ENCODE measurements at regions of chr6 and their contacts with region 1.

Region 1: DNA sequence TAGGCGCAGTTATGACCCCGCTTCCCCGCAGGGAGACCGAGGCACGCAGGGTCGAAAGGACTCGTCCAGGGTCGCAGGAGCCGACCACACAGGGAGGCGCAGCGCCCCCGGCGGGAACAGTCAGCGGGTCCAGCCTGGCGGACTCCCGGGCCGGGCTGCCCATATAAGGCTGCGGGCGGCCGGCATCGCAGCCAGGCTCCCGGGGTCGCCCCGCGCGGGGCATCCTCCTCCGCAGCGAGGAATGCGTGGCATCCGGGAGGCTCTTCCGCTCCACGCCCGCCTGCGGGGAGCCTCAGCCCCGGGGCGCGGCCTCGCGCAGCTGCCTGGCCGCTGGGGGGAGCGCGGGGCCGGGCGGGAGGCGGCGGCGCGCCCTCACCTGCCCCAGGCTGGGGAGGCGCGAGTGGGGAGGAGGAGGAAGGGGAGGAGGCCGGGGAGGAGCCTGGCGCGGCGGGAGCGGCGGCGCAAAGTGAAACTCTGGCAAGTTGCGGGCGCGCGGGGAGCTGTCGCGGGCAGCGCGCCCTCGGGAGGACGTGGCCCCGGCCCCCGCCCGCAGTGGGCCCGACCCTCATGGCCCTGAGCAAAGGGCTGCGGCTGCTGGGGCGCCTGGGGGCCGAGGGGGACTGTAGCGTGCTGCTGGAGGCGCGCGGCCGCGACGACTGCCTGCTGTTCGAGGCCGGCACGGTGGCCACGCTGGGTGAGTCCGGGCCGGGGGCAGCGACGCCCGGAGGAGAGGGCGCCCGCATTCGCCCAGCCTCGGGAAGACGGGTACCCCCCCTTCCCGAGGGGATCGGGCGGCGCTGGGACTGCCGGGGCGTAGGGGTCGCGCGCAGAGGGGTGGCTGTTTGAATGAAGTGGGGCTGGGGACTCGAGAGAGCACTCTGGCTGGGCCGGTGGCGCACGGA is at the start of gene SYNJ2:
- DNase-seq: peak; percentile 96
- H3K4me3 Mint-ChIP-seq: peak within 1 kb of the TSS; percentile 73
- H3K27ac Mint-ChIP-seq: peak within 1 kb of the TSS; percentile 87
- H3K4me1 Mint-ChIP-seq: peaks cover 48% of the 10 kb centered on the region
- H3K27me3 Mint-ChIP-seq: peaks cover 8% of the 10 kb centered on the region
- total RNA-seq, gene SYNJ2: 22.2 and 24.3 TPM in 2 replicates

Region 2: GRCh38 chr6:157823001-157823527 is 158.6 kb before region 1 on chr6 and contains the start of gene SNX9:
- intact Hi-C with region 1: loop called (anchors 5 kb)
- DNase-seq: peak; percentile 89
- H3K4me3 Mint-ChIP-seq: peak within 1 kb of the TSS; percentile 95
- H3K27ac Mint-ChIP-seq: peak within 1 kb of the TSS; percentile 99
- H3K4me1 Mint-ChIP-seq: peaks cover 34% of the 10 kb centered on the region
- H3K27me3 Mint-ChIP-seq: peaks cover 34% of the 10 kb centered on the region
- total RNA-seq, gene SNX9: 33.7 and 34.0 TPM in 2 replicates

Region 3: GRCh38 chr6:157941101-157941863 is 40.4 kb before region 1 on chr6:
- intact Hi-C with region 1: loop called (anchors 2 kb)
- DNase-seq: peak; percentile 52
- H3K4me3 Mint-ChIP-seq: no peak overlapping the region
- H3K27ac Mint-ChIP-seq: no peak overlapping the region
- H3K4me1 Mint-ChIP-seq: peaks cover 25% of the 10 kb centered on the region
- H3K27me3 Mint-ChIP-seq: no peaks in the 10 kb centered on the region

Region 4: DNA sequence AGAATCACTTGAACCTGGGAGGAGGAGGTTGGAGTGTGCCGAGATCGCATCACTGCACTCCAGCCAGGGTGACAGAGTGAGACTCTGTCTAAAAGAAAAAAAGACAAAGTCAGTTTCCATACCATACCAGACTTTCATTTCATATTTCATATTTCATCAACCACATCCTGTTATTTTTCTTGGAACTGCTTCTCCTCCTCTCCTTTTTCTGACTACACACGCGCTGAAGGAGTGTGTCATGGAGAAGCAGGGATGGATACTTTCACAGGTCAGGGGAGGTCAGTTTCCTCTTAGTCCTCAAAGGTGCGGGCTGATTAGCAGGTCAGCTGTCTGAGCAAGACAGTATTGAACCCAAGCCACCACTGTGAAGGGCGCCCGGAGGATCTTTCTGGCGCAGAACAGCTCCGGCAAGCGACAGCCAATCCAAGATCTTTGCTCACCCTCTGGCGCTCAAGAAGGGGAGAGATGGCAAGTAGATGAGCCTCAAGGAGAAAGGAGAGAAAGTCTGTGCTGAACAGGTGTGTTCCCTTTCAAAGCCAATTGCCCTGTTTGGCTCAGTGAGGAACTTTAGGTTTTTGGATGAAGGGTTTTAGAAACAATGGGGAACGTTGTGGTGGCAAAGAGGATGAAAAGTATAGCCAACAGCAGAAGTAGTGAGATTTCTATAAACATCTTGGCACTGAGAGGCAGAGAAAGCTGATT is 18.9 kb before region 1 on chr6:
- intact Hi-C with region 1: loop called (anchors 1 kb)
- DNase-seq: peak; percentile 80
- H3K4me3 Mint-ChIP-seq: peak overlapping the region; percentile 80
- H3K27ac Mint-ChIP-seq: peak overlapping the region; percentile 95
- H3K4me1 Mint-ChIP-seq: peaks cover 29% of the 10 kb centered on the region
- H3K27me3 Mint-ChIP-seq: no peaks in the 10 kb centered on the region

Region 5: GRCh38 chr6:158002951-158003853 is 21.6 kb after region 1 on chr6:
- intact Hi-C with region 1: loop called (anchors 2 kb)
- DNase-seq: peak; percentile 68
- H3K4me3 Mint-ChIP-seq: peak overlapping the region; percentile 17
- H3K27ac Mint-ChIP-seq: peak overlapping the region; percentile 74
- H3K4me1 Mint-ChIP-seq: peaks cover 40% of the 10 kb centered on the region
- H3K27me3 Mint-ChIP-seq: no peaks in the 10 kb centered on the region

Region 6: GRCh38 chr6:158047127-158047518 is 65.5 kb after region 1 on chr6:
- intact Hi-C with region 1: loop called (anchors 5 kb)
- DNase-seq: peak; percentile 85
- H3K4me3 Mint-ChIP-seq: peak overlapping the region; percentile 55
- H3K27ac Mint-ChIP-seq: peak overlapping the region; percentile 64
- H3K4me1 Mint-ChIP-seq: peaks cover 34% of the 10 kb centered on the region
- H3K27me3 Mint-ChIP-seq: no peaks in the 10 kb centered on the region

Region 7: DNA sequence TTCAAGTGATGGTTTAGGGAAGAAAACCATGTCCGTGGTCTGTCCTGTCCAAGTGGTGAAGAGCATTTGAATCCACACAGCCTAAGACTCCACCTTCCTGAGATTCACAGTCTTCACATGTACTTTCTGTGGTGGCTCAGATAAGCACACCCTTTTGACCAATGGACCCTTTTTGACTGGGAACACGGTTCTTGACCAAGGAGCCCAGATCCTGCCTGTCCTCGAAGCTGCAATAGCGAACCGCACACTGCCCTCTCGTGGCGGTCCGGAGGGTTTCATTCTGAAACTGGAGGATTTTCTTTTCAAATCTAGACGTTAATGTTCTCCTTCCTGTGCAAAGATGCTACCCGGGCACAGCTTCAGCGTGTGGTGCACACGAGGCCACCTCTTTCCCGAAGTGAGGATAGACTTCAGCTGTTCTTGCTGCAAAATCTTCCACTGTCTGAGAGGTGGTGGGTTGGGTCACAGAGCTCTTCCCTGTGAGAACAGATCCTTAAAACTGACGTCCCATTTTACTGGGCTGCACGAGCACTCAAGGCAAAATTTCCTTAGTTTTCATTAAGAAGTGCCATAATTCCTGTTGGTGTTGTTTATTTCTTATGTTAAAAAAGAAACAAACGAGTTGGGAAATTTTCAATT is 90.6 kb after region 1 on chr6:
- intact Hi-C with region 1: loop called (anchors 1 kb)
- DNase-seq: peak; percentile 90
- H3K4me3 Mint-ChIP-seq: no peak overlapping the region
- H3K27ac Mint-ChIP-seq: peak overlapping the region; percentile 19
- H3K4me1 Mint-ChIP-seq: peaks cover 33% of the 10 kb centered on the region
- H3K27me3 Mint-ChIP-seq: no peaks in the 10 kb centered on the region